ENCODE measurements at regions of chr17 and their contacts with region 1.

Region 1: DNA sequence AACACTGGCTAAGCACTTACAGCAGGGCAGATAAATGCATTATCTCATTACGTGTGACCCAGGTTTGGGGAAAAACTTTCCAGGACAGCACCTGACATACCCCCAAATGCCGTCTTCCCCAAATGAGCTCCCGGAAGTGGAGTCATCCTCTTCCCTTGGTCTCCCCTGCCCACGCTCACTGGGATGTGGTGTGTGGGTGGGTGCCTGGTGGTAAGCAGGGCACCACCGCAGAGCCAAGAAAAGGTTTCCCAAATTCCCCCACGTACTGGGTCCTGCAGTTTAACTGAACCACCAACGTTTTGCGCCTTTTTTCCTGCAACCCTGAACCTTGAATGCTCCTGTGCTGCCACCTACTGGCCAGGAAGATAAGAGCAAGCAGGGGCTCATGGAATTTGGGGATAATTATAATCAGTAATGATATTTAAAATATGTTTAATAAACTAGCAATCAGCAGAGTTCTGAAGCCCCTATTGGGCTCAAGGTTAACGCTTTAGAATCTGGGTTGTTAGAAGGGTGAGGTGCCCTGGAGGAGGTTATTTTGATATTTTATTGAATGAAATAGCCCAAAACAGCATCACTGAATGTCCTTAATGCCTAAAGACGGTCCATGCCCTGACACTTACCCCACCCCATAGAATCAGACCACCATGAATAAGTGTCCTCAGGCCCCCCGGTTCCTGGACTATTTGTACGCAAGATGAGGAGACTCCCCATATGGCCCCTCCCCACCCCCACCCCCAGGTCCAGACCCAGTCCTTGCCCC is 8.0 kb downstream of the SPPL2C start:
- DNase-seq: peak; percentile 39
- H3K4me3 ChIP-seq: no peak overlapping the region
- CTCF ChIP-seq: peak; percentile 94

Region 2: GRCh38 chr17:45218895-45219661 is 633.6 kb before region 1 on chr17:
- in situ Hi-C with region 1: loop called (anchors 25 kb)
- DNase-seq: peak; percentile 68
- H3K4me3 ChIP-seq: no peak overlapping the region
- CTCF ChIP-seq: peak; percentile 89

Region 3: DNA sequence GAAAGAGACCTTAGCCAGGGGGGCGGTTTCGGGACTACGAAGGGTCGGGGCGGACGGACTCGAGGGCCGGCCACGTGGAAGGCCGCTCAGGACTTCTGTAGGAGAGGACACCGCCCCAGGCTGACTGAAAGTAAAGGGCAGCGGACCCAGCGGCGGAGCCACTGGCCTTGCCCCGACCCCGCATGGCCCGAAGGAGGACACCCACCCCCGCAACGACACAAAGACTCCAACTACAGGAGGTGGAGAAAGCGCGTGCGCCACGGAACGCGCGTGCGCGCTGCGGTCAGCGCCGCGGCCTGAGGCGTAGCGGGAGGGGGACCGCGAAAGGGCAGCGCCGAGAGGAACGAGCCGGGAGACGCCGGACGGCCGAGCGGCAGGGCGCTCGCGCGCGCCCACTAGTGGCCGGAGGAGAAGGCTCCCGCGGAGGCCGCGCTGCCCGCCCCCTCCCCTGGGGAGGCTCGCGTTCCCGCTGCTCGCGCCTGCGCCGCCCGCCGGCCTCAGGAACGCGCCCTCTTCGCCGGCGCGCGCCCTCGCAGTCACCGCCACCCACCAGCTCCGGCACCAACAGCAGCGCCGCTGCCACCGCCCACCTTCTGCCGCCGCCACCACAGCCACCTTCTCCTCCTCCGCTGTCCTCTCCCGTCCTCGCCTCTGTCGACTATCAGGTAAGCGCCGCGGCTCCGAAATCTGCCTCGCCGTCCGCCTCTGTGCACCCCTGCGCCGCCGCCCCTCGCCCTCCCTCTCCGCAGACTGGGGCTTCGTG is 41.5 kb after region 1 on chr17 and contains the start of gene MAPT:
- in situ Hi-C with region 1: no loop called
- DNase-seq: peak; percentile 61
- H3K4me3 ChIP-seq: peak within 1 kb of the TSS; percentile 55
- CTCF ChIP-seq: peak; percentile 79